H1 (cell line): ENCODE measurements at regions of chr16 and their contacts with region 1.

Region 1: DNA sequence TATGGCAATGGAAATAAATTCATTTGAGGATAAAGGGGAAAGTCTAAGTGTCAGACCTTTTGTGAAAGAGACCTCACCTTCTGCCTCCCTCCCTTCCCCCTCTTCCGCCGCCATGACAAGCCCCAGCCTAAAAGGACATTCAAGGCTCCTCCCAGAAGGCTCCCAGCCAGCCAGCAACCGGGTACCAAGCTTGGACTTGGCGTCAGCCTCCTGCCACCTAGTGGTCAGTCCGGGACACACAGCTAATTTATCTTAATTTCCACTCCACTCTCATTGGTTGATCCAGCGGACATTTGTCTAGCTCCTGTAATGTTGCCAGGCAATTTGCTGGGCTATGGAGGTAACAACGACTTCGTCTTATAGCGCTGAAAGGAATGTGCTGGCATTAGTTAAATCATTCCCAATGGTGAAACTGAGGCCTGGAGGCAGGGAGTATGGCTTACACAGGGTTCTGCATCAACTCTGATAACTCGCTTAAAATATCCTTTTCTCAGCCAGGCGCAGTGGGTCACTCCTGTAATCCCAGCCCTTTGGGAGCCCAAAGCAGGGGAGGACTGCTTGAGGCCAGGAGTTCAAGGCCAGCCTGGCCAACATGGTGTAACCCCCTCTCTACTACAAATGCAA is 19.3 kb upstream of the CLEC3A start:
- DNase-seq: peak; percentile 91 to 97
- H3K4me3 ChIP-seq: no peak overlapping the region
- H3K27ac ChIP-seq: no peak overlapping the region
- H3K4me1 ChIP-seq: no peaks in the 10 kb centered on the region; a peak in 1 of 7 replicates
- H3K27me3 ChIP-seq: no peaks in the 10 kb centered on the region; a peak in 1 of 7 replicates
- CTCF ChIP-seq: peak; percentile 86 to 98 (median 93)
- EP300 ChIP-seq: peak in 1 of 2 experiments; percentile 27; a peak in 1 of 3 replicates
- POLR2A ChIP-seq: no peak
- RAD21 ChIP-seq: peak; percentile 98 to 99

Region 2: GRCh38 chr16:77782694-77783093 is 220.3 kb before region 1 on chr16:
- CTCF ChIA-PET with region 1: interaction called, 10 read pairs
- POLR2A ChIA-PET with region 1: no interaction called
- DNase-seq: no peak
- H3K4me3 ChIP-seq: no peak overlapping the region
- H3K27ac ChIP-seq: no peak overlapping the region
- H3K4me1 ChIP-seq: no peaks in the 10 kb centered on the region; a peak in 1 of 7 replicates
- H3K27me3 ChIP-seq: peaks cover 0 to 8% (median 8%) of the 10 kb centered on the region in 4 experiments; a peak in 4 of 7 replicates
- CTCF ChIP-seq: peak in 2 of 3 experiments; percentile 49 to 60; a peak in 3 of 4 replicates
- EP300 ChIP-seq: no peak
- POLR2A ChIP-seq: no peak
- RAD21 ChIP-seq: peak; percentile 48 to 58

Region 3: GRCh38 chr16:77961836-77962235 is 41.2 kb before region 1 on chr16:
- CTCF ChIA-PET with region 1: interaction called, 218 read pairs
- POLR2A ChIA-PET with region 1: interaction called, 5 read pairs
- DNase-seq: no peak
- H3K4me3 ChIP-seq: no peak overlapping the region
- H3K27ac ChIP-seq: no peak overlapping the region
- H3K4me1 ChIP-seq: peaks cover 19 to 34% (median 22%) of the 10 kb centered on the region in 4 experiments
- H3K27me3 ChIP-seq: peaks cover 0 to 15% (median 8%) of the 10 kb centered on the region in 4 experiments; a peak in 6 of 7 replicates
- CTCF ChIP-seq: no peak
- EP300 ChIP-seq: no peak
- POLR2A ChIP-seq: no peak
- RAD21 ChIP-seq: no peak

Region 4: GRCh38 chr16:78050842-78051311 is 47.9 kb after region 1 on chr16:
- CTCF ChIA-PET with region 1: interaction called, 14 read pairs
- POLR2A ChIA-PET with region 1: no interaction called
- DNase-seq: no peak
- H3K4me3 ChIP-seq: no peak overlapping the region
- H3K27ac ChIP-seq: no peak overlapping the region
- H3K4me1 ChIP-seq: no peaks in the 10 kb centered on the region
- H3K27me3 ChIP-seq: peaks cover 0 to 9% (median 6%) of the 10 kb centered on the region in 4 experiments; a peak in 4 of 7 replicates
- CTCF ChIP-seq: no peak
- EP300 ChIP-seq: no peak
- POLR2A ChIP-seq: no peak
- RAD21 ChIP-seq: no peak

Region 5: GRCh38 chr16:78127130-78127529 is 124.1 kb after region 1 on chr16:
- CTCF ChIA-PET with region 1: no interaction called
- POLR2A ChIA-PET with region 1: no interaction called
- DNase-seq: no peak
- H3K4me3 ChIP-seq: no peak overlapping the region
- H3K27ac ChIP-seq: no peak overlapping the region
- H3K4me1 ChIP-seq: peaks cover 0 to 3% (median 0%) of the 10 kb centered on the region in 4 experiments; a peak in 1 of 7 replicates
- H3K27me3 ChIP-seq: no peaks in the 10 kb centered on the region
- CTCF ChIP-seq: no peak
- EP300 ChIP-seq: no peak
- POLR2A ChIP-seq: no peak
- RAD21 ChIP-seq: no peak